Left lung (tissue), 14 donors: ENCODE measurements at regions of chr4 and their contacts with region 1.

Region 1: GRCh38 chr4:158856852-158857251 is 88.0 kb downstream of the FNIP2 start:
- DNase-seq: peak in 1 of 4 donors; percentile 20
- ATAC-seq: peak; percentile 75
- H3K4me3 ChIP-seq: no peak overlapping the region
- H3K27ac ChIP-seq: no peak overlapping the region
- H3K4me1 ChIP-seq: peaks cover 0 to 5% of the 10 kb centered on the region in 2 donors
- H3K27me3 ChIP-seq: no peaks in the 10 kb centered on the region
- CTCF ChIP-seq: peak; percentile 33 to 35

Region 2: DNA sequence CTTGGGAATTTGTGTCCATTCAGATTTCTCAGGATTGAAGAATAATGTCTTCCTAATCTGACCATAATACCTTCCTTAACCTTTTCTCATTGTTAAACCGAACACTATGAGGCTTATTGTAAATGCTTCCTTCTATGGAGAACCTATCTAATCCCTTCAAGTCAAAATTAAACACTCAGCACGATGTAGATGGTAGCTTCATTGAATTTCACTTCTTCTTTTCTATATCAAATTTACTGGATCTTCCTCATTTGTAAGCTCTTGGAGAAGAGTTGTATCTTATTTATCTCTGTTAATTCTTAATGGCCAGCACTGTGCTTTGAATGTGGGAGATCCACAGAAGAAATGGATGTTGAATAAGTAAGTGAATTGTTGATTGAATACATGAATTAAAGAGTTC is 137.0 kb after region 1 on chr4:
- intact Hi-C with region 1: no loop called
- DNase-seq: no peak
- ATAC-seq: no peak
- H3K4me3 ChIP-seq: no peak overlapping the region
- H3K27ac ChIP-seq: no peak overlapping the region
- H3K4me1 ChIP-seq: no peaks in the 10 kb centered on the region
- H3K27me3 ChIP-seq: no peaks in the 10 kb centered on the region
- CTCF ChIP-seq: no peak

Region 3: GRCh38 chr4:159027535-159027934 is 170.7 kb after region 1 on chr4:
- intact Hi-C with region 1: no loop called
- DNase-seq: no peak
- ATAC-seq: no peak
- H3K4me3 ChIP-seq: no peak overlapping the region
- H3K27ac ChIP-seq: no peak overlapping the region
- H3K4me1 ChIP-seq: no peaks in the 10 kb centered on the region
- H3K27me3 ChIP-seq: no peaks in the 10 kb centered on the region
- CTCF ChIP-seq: no peak

Region 4: DNA sequence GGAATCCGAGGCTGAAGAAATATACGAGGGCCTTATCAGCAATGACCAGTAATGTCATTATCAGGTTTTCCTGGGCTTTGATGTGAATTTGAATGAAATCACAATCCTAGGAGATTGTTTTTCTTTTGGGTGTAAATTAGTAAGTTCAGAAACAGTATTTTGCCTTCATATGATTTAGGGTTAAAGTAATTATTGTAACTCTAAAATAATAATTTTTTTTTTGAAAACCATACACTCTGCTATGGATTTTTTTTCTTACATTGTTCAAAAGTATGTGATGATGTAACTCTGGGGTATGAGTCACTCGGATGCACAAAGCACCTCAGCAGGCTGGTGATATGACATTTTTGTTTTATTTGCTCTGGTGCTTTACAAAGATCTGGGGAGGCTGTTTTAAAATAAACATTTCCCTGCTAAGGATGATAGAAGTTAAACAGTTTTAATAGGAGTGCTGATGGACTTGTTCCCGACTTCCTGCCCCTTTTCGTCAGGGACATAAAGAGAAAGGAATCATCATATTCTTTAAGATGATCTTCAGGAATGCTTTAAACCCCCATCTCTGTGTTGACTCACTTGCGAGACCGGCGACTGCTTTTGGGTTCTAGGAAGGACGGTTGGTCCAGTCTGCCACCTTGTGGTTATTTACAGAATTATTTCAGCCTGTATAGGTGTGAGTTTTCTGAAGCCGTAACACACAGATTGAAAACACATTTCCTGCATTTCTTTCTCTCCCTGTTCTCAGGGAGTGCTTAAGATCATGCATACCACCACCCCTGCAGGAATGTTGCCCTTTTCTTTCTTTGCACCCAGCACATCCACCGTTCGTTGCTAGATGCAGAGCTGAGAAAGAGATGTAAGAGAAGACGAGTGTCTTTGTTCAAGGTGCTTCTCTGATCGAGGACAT is 318.5 kb after region 1 on chr4:
- intact Hi-C with region 1: loop called in 1 of 2 experiments (anchors 10 kb)
- DNase-seq: peak; percentile 12 to 82 (median 65)
- ATAC-seq: peak; percentile 93
- H3K4me3 ChIP-seq: no peak overlapping the region
- H3K27ac ChIP-seq: peak overlapping the region in 1 of 2 donors; percentile 48
- H3K4me1 ChIP-seq: peaks cover 17 to 81% of the 10 kb centered on the region in 2 donors
- H3K27me3 ChIP-seq: no peaks in the 10 kb centered on the region
- CTCF ChIP-seq: peak; percentile 73 to 89

Region 5: DNA sequence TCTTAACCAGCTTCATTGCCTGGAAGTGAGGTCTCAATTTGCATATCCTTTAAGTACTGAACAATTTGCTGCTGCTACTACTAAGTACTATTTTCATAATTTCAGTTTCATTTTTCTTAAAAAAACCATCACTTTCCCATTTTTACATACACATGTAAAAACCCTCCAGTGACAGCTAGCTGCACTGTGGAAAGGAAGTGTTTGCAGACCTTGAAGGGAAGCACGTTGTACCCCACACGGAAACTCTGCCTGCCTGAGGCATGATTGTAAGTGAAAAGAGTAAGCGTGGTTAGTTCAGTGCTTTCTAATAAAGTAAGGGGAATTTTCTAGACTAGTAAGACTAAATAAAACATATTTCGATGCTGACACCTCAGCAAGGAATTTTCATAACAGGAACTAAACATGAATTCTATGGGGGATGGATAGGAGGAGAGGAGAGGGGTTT is 349.6 kb after region 1 on chr4:
- intact Hi-C with region 1: loop called in 1 of 2 experiments (anchors 10 kb)
- DNase-seq: no peak
- ATAC-seq: no peak
- H3K4me3 ChIP-seq: no peak overlapping the region
- H3K27ac ChIP-seq: no peak overlapping the region
- H3K4me1 ChIP-seq: peaks cover 3 to 33% of the 10 kb centered on the region in 2 donors
- H3K27me3 ChIP-seq: no peaks in the 10 kb centered on the region
- CTCF ChIP-seq: no peak